Left ventricle myocardium superior (tissue), 1 donor: ENCODE measurements at regions of chr3 and their contacts with region 1.

Region 1: DNA sequence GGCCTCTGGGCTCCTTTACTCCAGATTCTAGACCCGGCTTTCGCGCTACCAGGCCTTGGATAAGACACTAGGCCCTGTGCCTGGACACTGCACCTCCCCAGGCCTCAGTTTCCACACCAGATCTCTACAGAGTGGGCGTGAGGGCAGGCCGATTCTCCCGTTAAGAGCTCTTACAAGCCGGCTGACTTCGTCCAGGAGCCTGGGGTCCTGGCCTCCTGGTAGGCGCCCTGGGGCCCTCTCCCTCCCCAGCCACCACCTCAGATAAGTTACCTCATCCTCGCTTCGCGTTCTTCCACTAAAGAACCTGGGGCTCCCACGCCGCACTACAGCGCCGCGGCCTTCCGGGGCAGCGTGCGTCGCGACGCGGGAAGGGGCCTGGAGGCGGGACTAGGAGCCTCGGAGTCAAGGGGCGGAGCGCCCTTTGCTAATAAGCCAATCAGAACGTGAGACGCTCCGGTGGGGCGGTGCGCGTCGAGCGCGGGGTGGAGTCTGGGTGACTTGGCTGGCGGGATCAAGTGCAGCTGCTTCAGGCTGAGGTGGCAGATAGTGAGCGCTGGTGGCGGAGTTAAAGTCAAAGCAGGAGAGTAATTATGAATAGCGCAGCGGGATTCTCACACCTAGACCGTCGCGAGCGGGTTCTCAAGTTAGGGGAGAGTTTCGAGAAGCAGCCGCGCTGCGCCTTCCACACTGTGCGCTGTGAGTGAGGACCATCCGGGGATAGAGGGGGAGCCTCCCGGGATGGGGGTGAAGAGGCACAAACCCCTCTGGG is at the starts of genes EAF2 and IQCB1:
- DNase-seq: peak; percentile 97
- ATAC-seq: peak; percentile 100
- total RNA-seq, gene EAF2: 3.5 TPM
- total RNA-seq, gene IQCB1: 6.3 TPM

Region 2: GRCh38 chr3:121749276-121750086 is 85.4 kb before region 1 on chr3 and contains the start of gene GOLGB1:
- intact Hi-C with region 1: loop called (anchors 5 kb)
- DNase-seq: peak; percentile 92
- ATAC-seq: peak; percentile 99
- total RNA-seq, gene GOLGB1: 45.8 TPM